Psoas muscle (tissue), 8 donors: ENCODE measurements at regions of chr1 and their contacts with region 1.

Region 1: DNA sequence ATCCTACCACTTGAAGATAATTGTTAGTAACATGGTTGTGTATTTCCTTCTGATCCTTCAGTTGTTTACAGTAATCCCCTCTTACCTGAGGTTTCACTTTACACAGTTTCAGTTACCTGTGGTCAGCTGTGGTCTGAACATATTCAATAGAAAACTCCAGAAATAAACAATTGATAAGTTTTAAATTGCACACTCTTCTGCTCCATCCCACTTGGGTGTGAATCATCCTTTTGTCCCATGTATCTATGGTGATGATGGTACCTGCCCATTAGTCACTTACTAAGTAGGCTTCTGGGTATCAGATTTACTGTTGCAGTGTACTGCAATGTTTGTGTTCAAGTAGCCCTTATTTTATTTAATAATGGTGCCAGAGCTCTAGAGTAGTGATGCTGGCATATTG is 62.5 kb downstream of the OSBPL9 start:
- DNase-seq: no peak
- ATAC-seq: peak; percentile 83 to 91 (median 88)
- H3K4me3 ChIP-seq: no peak overlapping the region
- H3K27ac ChIP-seq: peak overlapping the region; percentile 43
- H3K4me1 ChIP-seq: peaks cover 19% of the 10 kb centered on the region
- H3K27me3 ChIP-seq: no peaks in the 10 kb centered on the region
- CTCF ChIP-seq: no peak

Region 2: DNA sequence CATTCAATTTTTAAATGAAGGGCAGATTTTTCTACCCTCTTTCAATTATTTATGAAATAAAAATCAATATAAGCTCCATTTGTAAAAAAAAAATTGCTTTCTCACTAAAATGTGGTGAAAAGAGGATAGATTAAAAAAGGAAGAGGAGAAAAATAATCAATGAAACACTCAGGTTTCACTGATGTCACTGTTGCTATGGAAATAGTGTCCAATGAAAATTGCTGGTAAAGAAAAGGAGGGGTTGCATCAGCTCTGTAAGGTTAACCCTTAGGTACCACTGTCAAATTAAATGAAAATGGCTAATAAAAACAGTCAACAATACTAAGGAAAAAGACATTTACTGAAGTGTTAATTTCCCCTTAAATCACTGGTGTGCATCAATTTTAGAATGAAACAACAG is 257.5 kb before region 1 on chr1:
- intact Hi-C with region 1: loop called in 1 of 2 experiments (anchors 10 kb)
- DNase-seq: no peak
- ATAC-seq: peak in 2 of 4 donors; percentile 61 to 63
- H3K4me3 ChIP-seq: no peak overlapping the region
- H3K27ac ChIP-seq: no peak overlapping the region
- H3K4me1 ChIP-seq: peaks cover 19% of the 10 kb centered on the region
- H3K27me3 ChIP-seq: no peaks in the 10 kb centered on the region
- CTCF ChIP-seq: no peak